ENCODE measurements at regions of chr19 and their contacts with region 1.

Region 1: GRCh38 chr19:35509861-35510625 is 3.4 kb downstream of the DMKN start:
- DNase-seq: peak; percentile 56
- H3K4me3 Mint-ChIP-seq: peak overlapping the region; percentile 30
- H3K27ac Mint-ChIP-seq: no peak overlapping the region
- H3K4me1 Mint-ChIP-seq: peaks cover 11% of the 10 kb centered on the region
- H3K27me3 Mint-ChIP-seq: peaks cover 49% of the 10 kb centered on the region

Region 2: DNA sequence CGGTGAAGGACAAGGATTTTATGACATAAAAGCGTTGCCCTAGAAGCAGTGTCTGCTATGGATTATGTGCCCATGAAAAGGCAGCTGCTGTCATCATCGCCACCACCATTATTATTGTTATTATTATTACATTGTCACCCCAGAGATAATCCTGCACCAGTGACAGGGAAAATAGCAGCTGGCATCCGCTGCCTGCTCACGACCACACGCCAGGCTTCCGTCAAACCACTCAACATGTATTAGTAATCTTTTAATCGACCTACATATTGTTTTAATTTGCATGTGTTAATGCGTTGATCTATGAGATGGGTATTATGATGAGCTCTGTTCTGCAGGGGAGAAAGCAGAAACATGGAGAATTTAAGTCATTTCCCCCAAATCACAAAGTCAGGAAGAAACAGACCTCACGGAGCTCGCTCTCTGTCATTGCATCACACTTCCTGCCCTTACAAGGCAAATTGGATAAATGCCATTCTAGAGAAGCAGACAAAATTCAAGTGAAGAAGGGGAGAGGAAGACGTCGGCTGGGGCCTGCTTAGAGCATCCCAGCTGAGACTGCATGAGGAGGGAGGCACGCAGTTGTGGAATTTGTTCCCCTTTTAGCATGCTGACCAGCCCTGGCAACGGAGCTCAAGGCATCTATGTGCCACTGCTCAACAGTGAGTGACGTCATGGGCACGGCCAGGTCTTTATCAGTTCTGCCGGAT is 152.0 kb before region 1 on chr19 and contains the start of gene FFAR3:
- intact Hi-C with region 1: no loop called
- DNase-seq: no peak
- H3K4me3 Mint-ChIP-seq: no peak within 1 kb of the TSS
- H3K27ac Mint-ChIP-seq: peak within 1 kb of the TSS; percentile 55
- H3K4me1 Mint-ChIP-seq: peaks cover 9% of the 10 kb centered on the region
- H3K27me3 Mint-ChIP-seq: peaks cover 2% of the 10 kb centered on the region
- total RNA-seq, gene FFAR3: 0.92 and 1.2 TPM in 2 replicates

Region 3: DNA sequence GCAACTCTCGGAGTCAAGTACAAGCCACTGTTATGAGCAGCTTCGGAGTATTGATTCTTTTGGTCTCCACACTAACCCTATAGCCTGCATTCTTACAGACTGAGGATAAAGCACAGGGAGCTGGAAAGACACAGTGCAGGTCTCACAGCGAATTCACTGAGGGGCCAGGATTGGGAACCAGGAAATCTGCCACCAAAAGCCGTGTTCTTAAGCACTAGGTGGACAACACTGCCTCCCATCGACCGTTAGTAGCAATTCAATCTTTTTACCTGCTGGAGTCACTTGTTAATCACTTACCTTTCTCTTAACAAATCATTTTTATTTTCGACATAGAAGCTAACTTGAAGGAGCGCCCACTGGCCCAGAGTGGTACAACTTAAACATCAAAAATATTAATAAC is 82.2 kb after region 1 on chr19:
- intact Hi-C with region 1: loop called (anchors 1 kb)
- DNase-seq: no peak
- H3K4me3 Mint-ChIP-seq: no peak overlapping the region
- H3K27ac Mint-ChIP-seq: no peak overlapping the region
- H3K4me1 Mint-ChIP-seq: peaks cover 6% of the 10 kb centered on the region
- H3K27me3 Mint-ChIP-seq: no peaks in the 10 kb centered on the region

Region 4: DNA sequence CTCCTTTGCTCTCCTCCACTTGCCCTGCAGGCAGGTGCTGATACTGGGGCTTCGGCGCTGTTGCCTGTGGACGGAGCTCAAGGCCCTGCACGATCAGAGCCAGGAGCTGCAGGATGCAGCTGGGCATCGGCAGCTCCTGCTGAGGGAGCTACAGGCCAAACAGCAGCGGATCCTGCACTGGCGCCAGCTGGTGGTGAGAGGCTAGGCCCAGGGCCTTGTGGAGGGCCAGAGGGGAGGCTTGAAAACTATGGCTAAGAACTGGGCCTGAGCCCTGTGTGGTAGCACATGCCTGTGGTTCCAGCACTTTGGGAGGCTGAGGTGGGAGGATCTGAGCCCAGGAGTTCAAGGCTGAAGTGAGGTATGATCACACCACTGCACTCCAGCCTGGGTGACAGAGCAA is 108.8 kb after region 1 on chr19:
- intact Hi-C with region 1: no loop called
- DNase-seq: no peak
- H3K4me3 Mint-ChIP-seq: no peak overlapping the region
- H3K27ac Mint-ChIP-seq: no peak overlapping the region
- H3K4me1 Mint-ChIP-seq: no peaks in the 10 kb centered on the region
- H3K27me3 Mint-ChIP-seq: no peaks in the 10 kb centered on the region